ENCODE measurements at regions of chrX and their contacts with region 1.

Region 1: DNA sequence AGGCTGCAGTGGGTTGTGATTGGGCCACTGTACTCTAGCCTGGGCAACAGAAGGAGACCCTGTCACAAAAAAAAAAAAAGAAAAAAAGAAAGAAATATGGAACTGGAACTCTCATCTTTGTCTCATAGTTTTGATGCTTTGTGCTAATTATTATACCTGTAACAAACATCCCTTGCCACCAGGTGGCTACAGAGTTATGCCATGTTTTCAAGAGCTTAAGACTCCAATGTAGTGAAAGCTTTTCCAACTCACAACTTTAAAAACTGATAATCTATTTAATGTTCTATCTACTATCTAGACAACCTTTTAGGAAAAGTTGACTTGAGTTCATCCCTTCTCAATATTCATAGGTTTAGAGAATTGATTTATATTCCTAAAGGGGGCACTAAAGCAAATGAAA is 42.4 kb downstream of the HTR2C start:
- DNase-seq: no peak
- ATAC-seq: no peak
- H3K4me3 Mint-ChIP-seq: no peak overlapping the region
- H3K27ac Mint-ChIP-seq: no peak overlapping the region
- H3K4me1 Mint-ChIP-seq: peaks cover 4% of the 10 kb centered on the region; the same call in 1 of the 2 replicates
- H3K27me3 Mint-ChIP-seq: peaks cover 12% of the 10 kb centered on the region
- CTCF ChIP-seq: no peak

Region 2: GRCh38 chrX:114717921-114718320 is 91.6 kb after region 1 on chrX:
- CTCF ChIA-PET with region 1: interaction called, 12 read pairs
- POLR2A ChIA-PET with region 1: no interaction called
- DNase-seq: peak; percentile 48
- ATAC-seq: peak; percentile 98
- H3K4me3 Mint-ChIP-seq: no peak overlapping the region
- H3K27ac Mint-ChIP-seq: no peak overlapping the region
- H3K4me1 Mint-ChIP-seq: no peaks in the 10 kb centered on the region
- H3K27me3 Mint-ChIP-seq: peaks cover 2% of the 10 kb centered on the region
- CTCF ChIP-seq: no peak

Region 3: GRCh38 chrX:114959729-114960128 is 333.4 kb after region 1 on chrX:
- CTCF ChIA-PET with region 1: interaction called, 25 read pairs
- POLR2A ChIA-PET with region 1: no interaction called
- DNase-seq: no peak
- ATAC-seq: no peak
- H3K4me3 Mint-ChIP-seq: no peak overlapping the region
- H3K27ac Mint-ChIP-seq: no peak overlapping the region
- H3K4me1 Mint-ChIP-seq: peaks cover 8% of the 10 kb centered on the region
- H3K27me3 Mint-ChIP-seq: no peaks in the 10 kb centered on the region
- CTCF ChIP-seq: no peak

Measured in WTC11 (cell line).